ENCODE measurements at regions of chr11 and their contacts with region 1.

Region 1: GRCh38 chr11:102007567-102008437 is 39.4 kb upstream of the CFAP300 start:
- DNase-seq: peak; percentile 70
- H3K4me3 ChIP-seq: no peak overlapping the region
- H3K27ac ChIP-seq: no peak overlapping the region
- H3K4me1 ChIP-seq: peaks cover 27% of the 10 kb centered on the region
- H3K27me3 ChIP-seq: no peaks in the 10 kb centered on the region

Region 2: GRCh38 chr11:101436511-101437142 is 571.2 kb before region 1 on chr11:
- in situ Hi-C with region 1: loop called (anchors 25 kb)
- DNase-seq: peak; percentile 58
- H3K4me3 ChIP-seq: no peak overlapping the region
- H3K27ac ChIP-seq: no peak overlapping the region
- H3K4me1 ChIP-seq: peaks cover 7% of the 10 kb centered on the region
- H3K27me3 ChIP-seq: no peaks in the 10 kb centered on the region

Region 3: GRCh38 chr11:101797335-101797734 is 210.5 kb before region 1 on chr11:
- in situ Hi-C with region 1: no loop called
- DNase-seq: peak; percentile 51
- H3K4me3 ChIP-seq: no peak overlapping the region
- H3K27ac ChIP-seq: no peak overlapping the region
- H3K4me1 ChIP-seq: peaks cover 14% of the 10 kb centered on the region
- H3K27me3 ChIP-seq: no peaks in the 10 kb centered on the region